Activated CD8-positive, alpha-beta T cell treated with anti-CD3 and anti-CD28 coated beads for 36 hours (primary cell): ENCODE measurements at regions of chr2 and their contacts with region 1.

Region 1: GRCh38 chr2:181891258-181891965 is at the start of gene ITPRID2:
- DNase-seq: peak; percentile 73
- ATAC-seq: peak; percentile 97
- H3K4me3 Mint-ChIP-seq: peak within 1 kb of the TSS; percentile 87
- H3K27ac Mint-ChIP-seq: peak within 1 kb of the TSS; percentile 86
- H3K4me1 Mint-ChIP-seq: peaks cover 25% of the 10 kb centered on the region
- H3K27me3 Mint-ChIP-seq: peaks cover 9% of the 10 kb centered on the region
- CTCF ChIP-seq: no peak
- total RNA-seq, gene ITPRID2: 42.5 to 50.8 TPM

Region 2: DNA sequence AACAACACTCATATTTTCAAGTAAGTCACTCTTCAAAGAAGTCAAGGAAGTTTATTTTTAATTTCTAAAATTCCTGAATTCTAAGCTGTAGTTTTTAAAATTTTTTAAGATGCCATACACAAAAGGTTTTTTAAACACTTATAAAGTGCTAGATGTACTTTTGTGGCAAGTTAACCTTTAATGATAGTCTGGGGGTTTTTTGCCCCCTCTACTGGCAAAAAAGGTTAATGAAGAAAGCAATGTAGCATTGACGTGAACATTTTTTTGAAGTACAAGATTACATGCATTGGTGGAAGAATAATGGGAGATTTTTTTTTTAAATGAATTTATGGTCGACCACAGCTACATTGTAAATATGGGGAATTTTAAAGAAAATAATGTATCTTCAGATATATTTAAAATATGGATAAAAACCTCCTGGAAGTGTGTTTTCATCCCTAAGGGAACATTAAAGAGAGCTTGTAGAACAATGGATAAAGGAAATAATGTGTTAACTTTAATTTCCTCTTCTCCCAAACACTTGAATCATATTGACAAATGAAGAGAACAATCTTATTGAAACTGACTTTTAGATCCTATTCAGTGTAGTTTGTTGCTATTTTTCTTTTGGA is 12.7 kb after region 1 on chr2:
- CTCF ChIA-PET with region 1: interaction called, 35 read pairs
- POLR2A ChIA-PET with region 1: interaction called, 5 read pairs
- intact Hi-C with region 1: no loop called
- DNase-seq: peak; percentile 6
- ATAC-seq: no peak
- H3K4me3 Mint-ChIP-seq: no peak overlapping the region
- H3K27ac Mint-ChIP-seq: no peak overlapping the region
- H3K4me1 Mint-ChIP-seq: peaks cover 27% of the 10 kb centered on the region
- H3K27me3 Mint-ChIP-seq: no peaks in the 10 kb centered on the region
- CTCF ChIP-seq: peak; percentile 67